ENCODE measurements at regions of chr18 and their contacts with region 1.

Region 1: GRCh38 chr18:6741232-6741663 is 11.7 kb downstream of the ARHGAP28 start:
- H3K4me3 Mint-ChIP-seq: no peak overlapping the region
- H3K27ac Mint-ChIP-seq: no peak overlapping the region
- H3K4me1 Mint-ChIP-seq: no peaks in the 10 kb centered on the region
- H3K27me3 Mint-ChIP-seq: no peaks in the 10 kb centered on the region

Region 2: DNA sequence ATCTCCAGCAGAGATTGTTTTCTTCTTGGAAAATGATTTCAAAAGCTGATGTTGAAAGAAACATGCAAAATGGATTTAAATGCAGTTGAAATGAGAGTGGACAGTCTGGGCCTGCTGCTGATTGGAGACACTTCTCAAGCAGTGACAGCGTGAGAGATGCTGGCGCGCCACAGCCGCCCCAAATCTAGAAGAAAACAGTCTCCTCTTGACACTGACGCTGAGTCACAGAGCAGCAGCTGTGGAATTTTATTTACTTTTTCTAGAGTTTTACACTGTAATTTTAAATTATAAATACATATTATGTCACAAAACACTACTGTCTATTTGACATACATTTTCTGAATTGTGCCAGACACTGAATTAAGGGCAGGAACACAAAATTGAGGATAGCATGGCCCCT is 724.1 kb before region 1 on chr18:
- intact Hi-C with region 1: loop called (anchors 5 kb)
- H3K4me3 Mint-ChIP-seq: no peak overlapping the region
- H3K27ac Mint-ChIP-seq: no peak overlapping the region
- H3K4me1 Mint-ChIP-seq: peaks cover 17% of the 10 kb centered on the region
- H3K27me3 Mint-ChIP-seq: no peaks in the 10 kb centered on the region

Region 3: GRCh38 chr18:6546229-6546628 is 195.0 kb before region 1 on chr18:
- intact Hi-C with region 1: no loop called
- H3K4me3 Mint-ChIP-seq: no peak overlapping the region
- H3K27ac Mint-ChIP-seq: no peak overlapping the region
- H3K4me1 Mint-ChIP-seq: no peaks in the 10 kb centered on the region
- H3K27me3 Mint-ChIP-seq: peaks cover 2% of the 10 kb centered on the region

Region 4: DNA sequence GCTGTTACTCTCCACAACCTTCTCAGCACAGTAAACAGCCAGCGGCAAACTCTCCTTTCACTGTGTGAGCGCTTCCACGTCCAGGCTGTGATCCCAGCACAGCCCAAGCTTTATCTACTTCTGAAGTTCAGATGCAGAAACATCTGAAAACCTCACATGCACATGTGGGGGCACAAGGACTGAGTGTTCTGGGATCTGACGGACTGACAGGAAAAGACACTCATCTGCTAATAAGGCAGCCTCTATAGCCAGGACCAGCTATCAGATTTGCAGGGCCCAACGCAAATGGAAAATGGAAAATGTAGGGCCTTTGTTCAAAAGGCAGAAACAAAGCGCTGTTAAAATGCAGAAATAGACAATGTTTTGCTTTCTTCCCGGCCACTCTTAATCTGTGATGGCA is 145.6 kb before region 1 on chr18:
- intact Hi-C with region 1: no loop called
- H3K4me3 Mint-ChIP-seq: no peak overlapping the region
- H3K27ac Mint-ChIP-seq: no peak overlapping the region
- H3K4me1 Mint-ChIP-seq: no peaks in the 10 kb centered on the region
- H3K27me3 Mint-ChIP-seq: no peaks in the 10 kb centered on the region

Measured in dendritic cell treated with granulocyte-macrophage colony-stimulating factor and Interleukin-4, amounts not matched to agents 40 ng/mL and 50 ng/mL, for 4 days (primary cell).